Head of caudate nucleus (tissue), 42 donors: ENCODE measurements at regions of chr11 and their contacts with region 1.

Region 1: DNA sequence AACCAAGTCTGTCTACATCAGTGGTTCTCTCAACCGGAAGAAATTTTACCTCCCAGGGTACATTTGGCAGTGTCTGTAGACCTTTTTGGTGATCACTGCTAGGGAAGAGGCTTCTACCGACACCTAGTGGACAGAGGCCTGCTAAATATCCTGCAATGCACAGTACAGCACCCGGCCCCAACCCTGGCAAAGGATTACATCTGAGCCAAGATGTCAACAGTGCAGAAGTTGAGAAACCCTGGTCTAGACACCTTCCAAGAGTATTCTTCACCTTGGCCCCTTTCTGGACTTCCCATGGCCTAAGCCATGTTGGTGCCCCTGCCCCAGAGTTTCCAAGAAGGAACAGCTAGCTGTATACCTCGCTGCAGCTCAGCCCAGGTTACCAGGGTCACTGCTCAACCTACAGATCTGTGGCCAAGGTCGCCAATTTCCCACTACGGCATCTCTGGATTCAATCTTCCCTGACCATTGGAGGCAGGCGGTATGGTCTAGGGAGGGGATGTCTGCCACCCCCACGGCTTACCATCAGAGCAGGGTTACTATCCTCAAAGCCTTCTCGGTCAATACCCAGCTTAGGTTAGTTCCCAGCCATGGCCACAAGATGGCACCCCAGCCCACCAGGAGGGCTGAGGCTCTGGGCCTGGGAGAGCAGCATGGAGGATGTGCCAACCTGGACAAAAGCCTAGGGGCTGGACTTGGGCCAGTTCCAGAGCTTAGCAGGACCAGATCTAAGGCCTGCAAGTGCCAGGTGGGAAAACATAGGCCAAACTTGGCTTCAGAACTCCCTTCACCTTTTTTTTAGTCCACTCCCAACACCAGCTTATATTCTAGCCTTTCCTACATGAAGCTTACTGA is 3.7 kb upstream of the KCNC1 start:
- DNase-seq: peak; percentile 65 to 94 (median 86)

Region 2: DNA sequence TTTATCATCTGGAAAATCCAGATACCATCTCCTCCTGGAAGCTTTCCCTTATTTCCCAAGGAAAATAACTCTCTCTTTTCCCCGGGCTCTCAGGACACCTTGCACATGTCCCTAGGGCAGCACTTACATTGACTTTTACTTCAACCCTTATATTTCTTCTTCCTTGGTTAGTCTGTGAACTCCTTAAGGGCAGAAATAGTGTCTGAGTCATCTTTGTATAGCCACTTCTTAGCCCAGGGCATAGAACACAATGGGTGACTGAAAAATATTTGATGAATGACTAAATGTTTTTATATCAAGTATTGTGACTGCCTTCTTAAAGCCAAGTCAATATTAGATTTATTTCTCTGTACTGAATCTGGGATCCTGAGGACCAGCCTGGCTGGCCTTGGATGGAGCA is 56.9 kb before region 1 on chr11:
- intact Hi-C with region 1: no loop called
- DNase-seq: no peak

Region 3: GRCh38 chr11:17686231-17686980 is 44.4 kb before region 1 on chr11:
- intact Hi-C with region 1: no loop called
- DNase-seq: peak in 1 of 42 donors; percentile 9

Region 4: GRCh38 chr11:17978553-17979287 is 247.9 kb after region 1 on chr11:
- intact Hi-C with region 1: loop called (anchors 5 kb)
- DNase-seq: peak; percentile 24 to 83 (median 67)